CD4-positive, alpha-beta T cell (primary cell): ENCODE measurements at regions of chr14 and their contacts with region 1.

Region 1: DNA sequence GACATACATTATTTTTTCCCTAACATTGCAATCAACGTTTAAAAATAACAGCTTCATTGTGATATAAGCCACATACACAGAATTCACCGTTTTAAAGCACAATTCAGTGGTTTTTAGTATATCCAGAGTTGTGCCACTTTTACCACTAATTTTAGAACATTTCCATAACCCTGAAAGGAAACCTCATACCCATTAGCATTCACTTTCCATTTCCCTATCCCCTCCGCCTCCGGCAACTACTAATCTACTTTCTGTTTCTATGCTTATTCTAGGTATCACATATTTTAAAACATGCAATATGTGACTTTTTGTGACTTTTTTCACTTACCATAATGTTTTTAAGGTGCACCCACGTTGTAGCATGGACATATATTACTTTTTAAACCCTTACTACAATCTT is 55.6 kb upstream of the ISM2 start:
- DNase-seq: no peak
- ATAC-seq: no peak
- H3K4me3 ChIP-seq: no peak overlapping the region
- H3K4me3 Mint-ChIP-seq: no peak overlapping the region
- H3K27ac ChIP-seq: peak overlapping the region in 1 of 2 donors; percentile 1
- H3K27ac Mint-ChIP-seq: peak overlapping the region; percentile 15
- H3K4me1 ChIP-seq: no peaks in the 10 kb centered on the region
- H3K4me1 Mint-ChIP-seq: peaks cover 8% of the 10 kb centered on the region
- H3K27me3 ChIP-seq: no peaks in the 10 kb centered on the region
- H3K27me3 Mint-ChIP-seq: no peaks in the 10 kb centered on the region
- CTCF ChIP-seq: no peak

Region 2: GRCh38 chr14:77151918-77152588 is 402.2 kb before region 1 on chr14:
- CTCF ChIA-PET with region 1: no interaction called
- POLR2A ChIA-PET with region 1: no interaction called
- intact Hi-C with region 1: loop called in 1 of 2 experiments (anchors 2 kb)
- DNase-seq: peak in 3 of 14 experiments; percentile 22 to 42 (median 23)
- ATAC-seq: no peak
- H3K4me3 ChIP-seq: no peak overlapping the region
- H3K4me3 Mint-ChIP-seq: no peak overlapping the region
- H3K27ac ChIP-seq: no peak overlapping the region
- H3K27ac Mint-ChIP-seq: no peak overlapping the region
- H3K4me1 ChIP-seq: no peaks in the 10 kb centered on the region
- H3K4me1 Mint-ChIP-seq: no peaks in the 10 kb centered on the region
- H3K27me3 ChIP-seq: peaks cover 14 to 43% of the 10 kb centered on the region in 2 experiments
- H3K27me3 Mint-ChIP-seq: peaks cover 59% of the 10 kb centered on the region
- CTCF ChIP-seq: no peak

Region 3: GRCh38 chr14:77301103-77301502 is 253.1 kb before region 1 on chr14:
- CTCF ChIA-PET with region 1: no interaction called
- POLR2A ChIA-PET with region 1: no interaction called
- intact Hi-C with region 1: loop called (anchors 2 to 5 kb)
- DNase-seq: peak; percentile 27 to 69 (median 40)
- ATAC-seq: peak; percentile 48
- H3K4me3 ChIP-seq: no peak overlapping the region
- H3K4me3 Mint-ChIP-seq: no peak overlapping the region
- H3K27ac ChIP-seq: no peak overlapping the region
- H3K27ac Mint-ChIP-seq: no peak overlapping the region
- H3K4me1 ChIP-seq: no peaks in the 10 kb centered on the region
- H3K4me1 Mint-ChIP-seq: no peaks in the 10 kb centered on the region
- H3K27me3 ChIP-seq: no peaks in the 10 kb centered on the region
- H3K27me3 Mint-ChIP-seq: no peaks in the 10 kb centered on the region
- CTCF ChIP-seq: peak; percentile 60

Region 4: DNA sequence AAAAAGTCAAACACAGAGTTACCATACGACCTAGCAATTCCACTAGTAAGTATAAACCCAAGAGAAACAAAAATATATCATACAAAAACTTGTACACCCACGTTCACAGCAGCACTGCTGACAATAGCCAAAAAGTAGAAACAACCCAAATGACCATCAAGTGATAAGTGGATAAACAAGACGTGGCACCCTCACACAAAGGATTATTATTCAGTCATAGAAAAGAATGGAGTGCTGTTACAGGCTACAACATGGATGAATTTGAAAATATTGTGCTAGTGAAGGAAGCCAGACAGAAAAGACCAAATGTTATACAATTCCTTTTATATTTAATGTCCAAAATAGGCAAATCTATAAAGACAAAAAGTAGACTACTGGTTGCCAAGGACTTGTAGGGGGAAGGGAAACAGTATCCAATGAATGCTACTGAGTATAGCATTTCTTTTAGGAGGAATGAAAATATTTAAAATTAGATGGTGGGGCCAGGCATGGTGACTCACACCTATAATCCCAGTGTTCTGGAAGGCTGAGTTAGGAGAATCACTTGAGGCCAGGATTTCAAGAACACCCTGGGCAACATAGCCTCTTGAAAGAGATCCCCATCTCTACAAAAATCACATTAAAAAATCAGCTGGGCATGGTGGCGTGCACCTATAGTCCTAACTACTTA is 20.4 kb after region 1 on chr14:
- CTCF ChIA-PET with region 1: no interaction called
- POLR2A ChIA-PET with region 1: no interaction called
- intact Hi-C with region 1: no loop called
- DNase-seq: no peak
- ATAC-seq: no peak
- H3K4me3 ChIP-seq: no peak overlapping the region
- H3K4me3 Mint-ChIP-seq: no peak overlapping the region
- H3K27ac ChIP-seq: no peak overlapping the region
- H3K27ac Mint-ChIP-seq: no peak overlapping the region
- H3K4me1 ChIP-seq: no peaks in the 10 kb centered on the region
- H3K4me1 Mint-ChIP-seq: peaks cover 11% of the 10 kb centered on the region
- H3K27me3 ChIP-seq: no peaks in the 10 kb centered on the region
- H3K27me3 Mint-ChIP-seq: no peaks in the 10 kb centered on the region
- CTCF ChIP-seq: no peak

Region 5: DNA sequence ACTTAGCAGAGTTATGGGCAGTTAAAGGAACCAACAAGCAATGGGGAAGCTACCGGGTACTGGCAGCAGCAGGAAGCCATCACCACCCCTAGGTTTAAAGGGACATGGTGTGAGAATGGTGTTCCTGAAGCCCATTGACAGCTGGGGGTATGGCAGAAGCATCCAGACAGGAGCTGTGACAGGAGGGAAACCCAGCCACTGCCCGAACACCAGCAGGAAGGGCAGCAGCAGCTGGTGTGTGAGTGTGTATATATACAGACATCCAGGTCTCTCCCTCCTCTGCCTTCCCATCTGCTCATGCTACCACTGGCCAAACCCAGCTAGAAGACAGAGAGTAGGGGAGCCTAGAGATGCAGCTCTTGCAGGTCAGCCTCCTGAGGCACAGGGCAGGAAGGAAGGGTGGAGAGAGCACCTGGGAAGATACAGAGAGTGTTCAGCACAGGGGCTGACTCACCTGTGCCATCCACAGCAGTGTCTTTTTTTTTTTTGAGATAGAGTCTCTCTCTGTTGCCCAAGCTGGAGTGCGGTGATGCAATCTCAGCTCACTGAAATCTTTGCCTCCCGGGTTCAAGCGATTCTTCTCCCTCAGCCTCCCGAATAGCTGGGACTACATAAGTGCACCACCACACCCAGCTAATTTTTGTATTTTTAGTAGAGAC is 236.5 kb after region 1 on chr14:
- CTCF ChIA-PET with region 1: no interaction called
- POLR2A ChIA-PET with region 1: no interaction called
- intact Hi-C with region 1: no loop called
- DNase-seq: no peak
- ATAC-seq: no peak
- H3K4me3 ChIP-seq: no peak overlapping the region
- H3K4me3 Mint-ChIP-seq: no peak overlapping the region
- H3K27ac ChIP-seq: no peak overlapping the region
- H3K27ac Mint-ChIP-seq: no peak overlapping the region
- H3K4me1 ChIP-seq: no peaks in the 10 kb centered on the region
- H3K4me1 Mint-ChIP-seq: no peaks in the 10 kb centered on the region
- H3K27me3 ChIP-seq: peaks cover 0 to 5% of the 10 kb centered on the region in 2 experiments
- H3K27me3 Mint-ChIP-seq: peaks cover 4% of the 10 kb centered on the region
- CTCF ChIP-seq: no peak